Caco-2 (cell line): ENCODE measurements at regions of chr5 and their contacts with region 1.

Region 1: DNA sequence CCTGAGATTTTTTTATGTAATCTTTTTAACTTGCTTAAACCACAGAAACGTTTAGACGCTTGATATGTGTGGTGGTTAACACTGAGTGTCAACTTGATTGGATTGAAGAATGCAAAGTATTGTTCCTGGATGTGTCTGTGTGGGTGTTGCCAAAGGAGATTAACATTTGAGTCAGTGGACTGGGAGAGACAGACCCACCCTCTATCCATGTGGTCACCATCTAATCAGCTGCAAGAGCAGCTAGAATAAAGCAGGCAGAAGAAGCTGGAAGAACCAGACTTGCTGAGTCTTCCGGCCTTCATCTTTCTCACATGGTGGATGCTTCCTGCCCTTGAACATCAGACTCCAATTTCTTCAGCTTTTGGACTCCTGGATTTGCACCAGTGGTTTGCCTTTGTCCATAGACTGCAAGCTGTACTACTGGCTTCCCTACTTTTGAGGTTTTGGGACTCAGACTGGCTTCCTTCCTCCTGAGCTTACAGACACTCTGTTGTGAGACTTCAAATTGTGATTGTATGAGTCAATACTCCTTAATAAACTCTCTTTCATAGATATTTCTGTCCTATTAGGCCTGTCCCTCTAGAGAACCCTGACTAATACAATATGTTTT is 816.0 kb upstream of the CDH9 start:
- DNase-seq: no peak
- H3K4me3 ChIP-seq: no peak overlapping the region
- H3K4me3 Mint-ChIP-seq: no peak overlapping the region
- H3K27ac Mint-ChIP-seq: no peak overlapping the region
- H3K4me1 ChIP-seq: no peaks in the 10 kb centered on the region; the same call in 1 of the 2 replicates
- H3K4me1 Mint-ChIP-seq: no peaks in the 10 kb centered on the region
- H3K27me3 ChIP-seq: no peaks in the 10 kb centered on the region
- H3K27me3 Mint-ChIP-seq: no peaks in the 10 kb centered on the region
- CTCF ChIP-seq: no peak

Region 2: DNA sequence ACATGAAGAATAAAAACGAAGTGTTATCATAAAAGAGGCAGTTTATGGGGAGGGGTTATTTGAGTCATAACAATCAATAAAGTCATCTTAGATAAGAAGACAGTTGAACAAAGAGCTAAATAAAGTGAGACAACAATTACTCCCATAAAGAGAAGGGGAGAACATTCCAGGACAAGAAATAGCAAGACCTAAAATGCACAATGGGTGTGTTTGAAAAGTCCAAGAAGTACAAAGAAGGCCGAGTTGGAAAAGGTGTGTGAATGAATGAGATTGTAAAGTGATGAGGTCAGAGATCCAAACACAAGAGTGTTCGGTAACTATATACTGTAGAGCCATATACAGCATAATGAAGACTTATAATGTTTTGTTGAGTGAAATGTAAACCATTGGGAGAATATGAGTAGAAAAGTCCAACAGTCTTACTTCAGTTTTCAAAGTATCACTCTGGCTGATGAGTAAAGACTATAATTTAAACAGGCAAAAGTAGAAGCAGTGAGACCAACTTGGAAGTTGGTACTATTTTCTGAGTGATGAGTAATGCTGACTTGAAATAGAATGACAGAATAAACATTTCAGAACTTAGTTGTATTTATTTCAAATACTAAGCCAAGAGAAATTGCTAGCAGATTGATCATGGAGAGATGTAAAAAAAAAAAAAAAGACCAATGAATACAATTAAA is 52.7 kb after region 1 on chr5:
- CTCF ChIA-PET with region 1: no interaction called
- POLR2A ChIA-PET with region 1: no interaction called
- intact Hi-C with region 1: loop called (anchors 2 kb)
- DNase-seq: peak in 1 of 2 experiments; percentile 48
- H3K4me3 ChIP-seq: no peak overlapping the region
- H3K4me3 Mint-ChIP-seq: peak overlapping the region; percentile 48
- H3K27ac Mint-ChIP-seq: peak overlapping the region; percentile 87
- H3K4me1 ChIP-seq: peaks cover 30% of the 10 kb centered on the region
- H3K4me1 Mint-ChIP-seq: peaks cover 17% of the 10 kb centered on the region
- H3K27me3 ChIP-seq: no peaks in the 10 kb centered on the region
- H3K27me3 Mint-ChIP-seq: no peaks in the 10 kb centered on the region
- CTCF ChIP-seq: no peak

Region 3: GRCh38 chr5:28066856-28067255 is 212.5 kb after region 1 on chr5:
- CTCF ChIA-PET with region 1: no interaction called
- POLR2A ChIA-PET with region 1: no interaction called
- intact Hi-C with region 1: no loop called
- DNase-seq: no peak
- H3K4me3 ChIP-seq: no peak overlapping the region
- H3K4me3 Mint-ChIP-seq: no peak overlapping the region
- H3K27ac Mint-ChIP-seq: no peak overlapping the region
- H3K4me1 ChIP-seq: no peaks in the 10 kb centered on the region
- H3K4me1 Mint-ChIP-seq: no peaks in the 10 kb centered on the region
- H3K27me3 ChIP-seq: no peaks in the 10 kb centered on the region
- H3K27me3 Mint-ChIP-seq: no peaks in the 10 kb centered on the region
- CTCF ChIP-seq: no peak